A549 (cell line): ENCODE measurements at regions of chr1 and their contacts with region 1.

Region 1: DNA sequence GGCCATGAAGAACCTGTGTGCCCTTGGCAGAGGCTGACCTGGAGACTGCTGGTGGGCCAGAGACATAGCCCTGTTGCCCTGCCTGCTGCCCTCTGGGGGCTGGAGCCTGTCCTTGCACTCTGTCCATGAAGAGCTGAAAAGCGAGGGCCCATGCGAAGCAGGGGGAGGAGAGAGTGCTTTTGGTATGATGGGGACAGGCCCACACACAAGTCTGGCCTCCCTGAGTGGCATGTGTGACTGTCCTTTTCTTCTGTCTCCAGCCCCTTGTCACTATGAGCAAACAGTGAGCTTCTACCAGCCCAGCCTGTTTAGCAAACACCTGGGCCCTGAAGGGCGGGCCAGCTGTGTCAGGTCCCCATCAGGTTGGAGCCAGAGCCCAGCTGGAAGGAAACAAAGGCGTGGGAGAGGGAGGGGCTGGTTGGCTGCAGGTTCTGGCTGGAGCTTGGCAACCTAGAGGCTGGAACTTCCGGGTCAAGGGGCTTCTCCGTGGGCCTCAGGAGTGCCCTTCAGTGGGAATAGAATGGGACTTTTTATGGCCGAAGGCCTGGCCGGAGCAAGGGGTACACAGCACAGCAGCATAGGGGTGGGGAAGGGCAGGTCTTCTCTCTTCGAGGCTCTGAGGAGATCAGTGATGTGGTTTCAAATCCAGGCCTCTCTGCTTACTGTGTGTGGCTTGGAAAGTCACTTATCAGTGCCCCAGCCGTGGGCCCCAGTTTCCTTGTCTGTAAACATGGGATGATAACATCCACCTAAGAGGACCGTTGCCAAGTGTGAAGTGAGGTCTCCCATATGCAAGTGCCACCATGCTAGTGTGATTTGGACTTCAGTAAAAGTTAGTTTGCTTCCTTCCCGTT is 14.3 kb downstream of the QSOX1 start:
- DNase-seq: peak; percentile 64 to 82
- ATAC-seq: peak; percentile 83 to 94
- H3K4me3 ChIP-seq: no peak overlapping the region
- H3K27ac ChIP-seq: no peak overlapping the region; a peak in 1 of 6 replicates
- H3K4me1 ChIP-seq: peaks cover 19% of the 10 kb centered on the region
- CTCF ChIP-seq: peak; percentile 46; the same call in 2 of the 3 replicates
- EP300 ChIP-seq: no peak
- POLR2A ChIP-seq: no peak
- RAD21 ChIP-seq: peak; percentile 43 to 69; a peak in 4 of 5 replicates

Region 2: GRCh38 chr1:179867807-179868330 is 301.1 kb before region 1 on chr1:
- CTCF ChIA-PET with region 1: interaction called, 92 read pairs
- POLR2A ChIA-PET with region 1: no interaction called
- DNase-seq: peak; percentile 54 to 64
- ATAC-seq: peak; percentile 96 to 98
- H3K4me3 ChIP-seq: no peak overlapping the region
- H3K27ac ChIP-seq: no peak overlapping the region
- H3K4me1 ChIP-seq: peaks cover under 1% of the 10 kb centered on the region; the same call in 1 of the 3 replicates
- CTCF ChIP-seq: peak; percentile 81
- EP300 ChIP-seq: no peak
- POLR2A ChIP-seq: no peak
- RAD21 ChIP-seq: peak; percentile 75

Region 3: GRCh38 chr1:180154325-180155181 is 14.5 kb before region 1 on chr1 and contains the start of gene QSOX1:
- CTCF ChIA-PET with region 1: interaction called, 70 read pairs
- POLR2A ChIA-PET with region 1: interaction called, 4 read pairs
- DNase-seq: peak; percentile 86 to 91
- ATAC-seq: peak; percentile 86 to 89
- H3K4me3 ChIP-seq: peak within 1 kb of the TSS; percentile 90
- H3K27ac ChIP-seq: peak within 1 kb of the TSS; percentile 96 to 97
- H3K4me1 ChIP-seq: peaks cover 34% of the 10 kb centered on the region
- CTCF ChIP-seq: no peak
- EP300 ChIP-seq: no peak
- POLR2A ChIP-seq: peak; percentile 95
- RAD21 ChIP-seq: no peak; a peak in 1 of 5 replicates
- polyA plus RNA-seq, gene QSOX1: 60.2 and 67.3 TPM in 2 replicates

Region 4: DNA sequence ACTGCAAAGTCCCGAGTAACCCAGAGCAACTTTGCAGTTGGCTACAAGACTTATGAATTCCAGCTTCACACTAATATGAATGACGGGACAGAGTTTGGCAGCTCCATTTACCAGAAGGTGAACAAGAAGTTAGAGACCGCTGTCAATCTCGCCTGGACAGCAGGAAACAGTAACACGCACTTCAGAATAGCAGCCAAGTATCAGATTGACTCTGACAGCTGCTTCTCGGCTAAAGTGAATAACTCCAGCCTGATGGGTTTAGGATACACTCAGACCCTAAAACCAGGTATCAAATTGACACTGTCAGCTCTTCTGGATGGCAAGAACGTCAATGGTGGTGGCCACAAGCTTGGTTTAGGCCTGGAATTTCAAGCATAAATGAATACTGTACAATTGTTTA is 266.6 kb after region 1 on chr1:
- CTCF ChIA-PET with region 1: no interaction called
- POLR2A ChIA-PET with region 1: no interaction called
- DNase-seq: no peak
- ATAC-seq: no peak
- H3K4me3 ChIP-seq: no peak overlapping the region
- H3K27ac ChIP-seq: no peak overlapping the region
- H3K4me1 ChIP-seq: no peaks in the 10 kb centered on the region
- CTCF ChIP-seq: no peak
- EP300 ChIP-seq: no peak
- POLR2A ChIP-seq: no peak
- RAD21 ChIP-seq: no peak